Activated CD4-positive, alpha-beta memory T cell treated with anti-CD3 and anti-CD28 coated beads, Interleukin-2, amount 10 ng/mL, durations not matched to agents 7 days and 5 days (primary cell): ENCODE measurements at regions of chr12 and their contacts with region 1.

Region 1: GRCh38 chr12:76559400-76560085 is at the start of gene OSBPL8:
- DNase-seq: peak; percentile 98
- H3K4me3 Mint-ChIP-seq: peak within 1 kb of the TSS; percentile 86
- H3K27ac Mint-ChIP-seq: peak within 1 kb of the TSS; percentile 95
- H3K4me1 Mint-ChIP-seq: peaks cover 43% of the 10 kb centered on the region
- H3K27me3 Mint-ChIP-seq: peaks cover 5% of the 10 kb centered on the region
- total RNA-seq, gene OSBPL8: 113 to 121 TPM

Region 2: DNA sequence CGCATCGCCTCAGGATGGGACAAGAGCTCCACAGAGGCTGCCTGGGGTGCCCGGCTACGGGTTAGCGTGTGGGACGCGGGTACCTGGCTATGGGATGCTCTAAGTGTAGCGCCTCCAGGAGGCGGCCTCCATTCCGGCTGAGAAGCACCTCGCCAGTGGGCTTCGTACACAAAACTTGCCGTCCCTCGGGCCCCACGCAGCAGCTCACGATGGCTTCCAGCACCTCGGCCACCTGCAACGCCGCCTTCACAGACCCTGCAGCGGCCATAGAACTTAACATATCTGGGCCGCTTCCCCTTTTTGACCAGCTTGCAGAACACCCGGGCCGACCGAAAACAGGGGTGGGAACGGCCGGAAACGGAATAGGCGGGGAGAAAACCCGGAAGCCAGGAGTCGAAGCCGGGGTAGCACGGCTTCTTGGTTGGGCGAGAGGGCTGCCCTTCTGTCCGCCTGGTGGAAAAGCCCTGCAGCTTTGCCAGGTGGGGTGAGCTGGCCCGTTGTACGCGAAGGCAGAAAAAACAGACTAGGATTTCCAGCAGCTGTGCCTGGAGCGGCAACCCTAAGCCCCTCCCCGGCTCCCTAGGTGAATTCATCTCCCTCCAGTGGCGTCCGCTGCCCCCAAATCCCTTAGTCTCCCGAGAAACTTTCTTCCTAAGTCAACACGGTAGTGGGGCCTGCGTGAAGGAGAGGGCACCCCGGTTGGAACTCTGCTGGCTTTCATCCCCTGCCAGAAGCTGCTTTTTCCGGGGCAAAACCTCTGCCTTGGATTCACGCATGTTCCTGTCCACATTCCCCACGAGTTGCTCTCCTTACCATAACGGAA is 211.3 kb before region 1 on chr12 and contains the start of gene BBS10:
- CTCF ChIA-PET with region 1: interaction called, 3 read pairs
- POLR2A ChIA-PET with region 1: interaction called, 15 read pairs
- DNase-seq: peak; percentile 89
- H3K4me3 Mint-ChIP-seq: peak within 1 kb of the TSS; percentile 96
- H3K27ac Mint-ChIP-seq: peak within 1 kb of the TSS; percentile 82
- H3K4me1 Mint-ChIP-seq: peaks cover 25% of the 10 kb centered on the region
- H3K27me3 Mint-ChIP-seq: no peaks in the 10 kb centered on the region
- total RNA-seq, gene BBS10: 4.4 to 5.0 TPM

Region 3: GRCh38 chr12:76529226-76529918 is 30.2 kb before region 1 on chr12:
- CTCF ChIA-PET with region 1: no interaction called
- POLR2A ChIA-PET with region 1: no interaction called
- DNase-seq: no peak
- H3K4me3 Mint-ChIP-seq: no peak overlapping the region
- H3K27ac Mint-ChIP-seq: no peak overlapping the region
- H3K4me1 Mint-ChIP-seq: peaks cover 5% of the 10 kb centered on the region
- H3K27me3 Mint-ChIP-seq: no peaks in the 10 kb centered on the region

Region 4: GRCh38 chr12:76548222-76548837 is 11.2 kb before region 1 on chr12:
- CTCF ChIA-PET with region 1: no interaction called
- POLR2A ChIA-PET with region 1: interaction called, 46 read pairs
- DNase-seq: no peak
- H3K4me3 Mint-ChIP-seq: no peak overlapping the region
- H3K27ac Mint-ChIP-seq: no peak overlapping the region
- H3K4me1 Mint-ChIP-seq: peaks cover 61% of the 10 kb centered on the region
- H3K27me3 Mint-ChIP-seq: no peaks in the 10 kb centered on the region